Ovary (tissue), 10 donors: ENCODE measurements at regions of chr7 and their contacts with region 1.

Region 1: GRCh38 chr7:149125863-149126661 is at the start of gene ZNF425:
- DNase-seq: peak; percentile 91 to 97 (median 95)
- H3K4me3 ChIP-seq: peak within 1 kb of the TSS; percentile 72
- H3K27ac ChIP-seq: peak within 1 kb of the TSS; percentile 66 to 88
- H3K4me1 ChIP-seq: peaks cover 2% of the 10 kb centered on the region
- H3K27me3 ChIP-seq: no peaks in the 10 kb centered on the region
- CTCF ChIP-seq: peak; percentile 98 to 99 (median 99)
- EP300 ChIP-seq: no peak
- POLR2A ChIP-seq: peak; percentile 89
- total RNA-seq, gene ZNF425: 1.4 to 4.7 (median 3.8) TPM

Region 2: GRCh38 chr7:149090397-149091195 is 35.5 kb before region 1 on chr7 and contains the start of gene ZNF786:
- intact Hi-C with region 1: loop called in 1 of 4 experiments (anchors 2 kb)
- DNase-seq: peak; percentile 91 to 95 (median 94)
- H3K4me3 ChIP-seq: peak within 1 kb of the TSS; percentile 93
- H3K27ac ChIP-seq: peak within 1 kb of the TSS; percentile 93 to 96
- H3K4me1 ChIP-seq: no peaks in the 10 kb centered on the region
- H3K27me3 ChIP-seq: no peaks in the 10 kb centered on the region
- CTCF ChIP-seq: peak; percentile 96 to 98 (median 97)
- EP300 ChIP-seq: no peak
- POLR2A ChIP-seq: peak; percentile 83
- total RNA-seq, gene ZNF786: 3.9 to 11.6 (median 8.7) TPM